ENCODE measurements at regions of chrX and their contacts with region 1.

Region 1: DNA sequence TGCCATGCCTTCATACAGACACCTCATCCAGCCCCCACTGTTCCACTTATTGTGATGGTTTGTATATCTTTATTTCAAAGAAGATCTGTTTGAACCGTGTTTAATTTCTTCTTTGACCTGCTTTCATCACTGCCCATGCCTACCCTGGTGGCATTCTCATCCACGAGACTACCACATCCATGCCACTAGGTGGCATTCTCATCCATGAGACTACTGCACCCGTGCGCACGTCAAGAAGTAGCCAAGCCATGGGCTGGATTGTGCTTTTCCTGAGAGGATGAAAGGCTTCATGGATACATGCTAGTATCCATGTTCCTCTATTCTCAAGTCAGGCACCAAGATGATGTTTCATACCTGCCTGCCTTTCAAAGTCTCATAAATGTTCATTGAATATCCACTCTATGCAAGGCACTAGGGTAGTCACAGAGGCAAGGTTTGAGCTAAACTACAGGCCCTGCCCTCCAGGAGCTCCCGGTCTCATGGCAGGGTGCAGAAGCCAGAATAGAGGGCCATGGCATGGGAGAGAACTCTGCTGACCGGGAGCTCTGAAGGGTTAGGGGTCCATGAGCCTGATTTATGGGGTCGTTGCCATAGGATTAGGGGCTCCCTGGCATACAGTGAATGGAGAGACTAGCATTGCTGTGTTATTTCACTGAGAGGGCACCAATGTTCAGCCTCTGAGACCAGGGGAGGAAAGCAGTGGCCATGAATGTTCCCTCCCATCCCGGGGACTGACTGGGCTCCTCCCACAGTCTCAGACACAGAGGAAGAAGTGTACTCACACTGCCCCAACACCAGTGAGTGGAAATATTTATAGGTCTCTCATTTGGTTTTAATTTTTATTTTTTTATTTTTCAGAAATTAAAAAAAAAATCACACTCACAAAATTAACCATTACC is 24.8 kb upstream of the EOLA2 start:
- DNase-seq: no peak
- H3K4me3 ChIP-seq: no peak overlapping the region
- H3K27ac ChIP-seq: no peak overlapping the region
- H3K4me1 ChIP-seq: no peaks in the 10 kb centered on the region
- H3K27me3 ChIP-seq: no peaks in the 10 kb centered on the region
- CTCF ChIP-seq: peak; percentile 43 to 64 (median 56)

Region 2: DNA sequence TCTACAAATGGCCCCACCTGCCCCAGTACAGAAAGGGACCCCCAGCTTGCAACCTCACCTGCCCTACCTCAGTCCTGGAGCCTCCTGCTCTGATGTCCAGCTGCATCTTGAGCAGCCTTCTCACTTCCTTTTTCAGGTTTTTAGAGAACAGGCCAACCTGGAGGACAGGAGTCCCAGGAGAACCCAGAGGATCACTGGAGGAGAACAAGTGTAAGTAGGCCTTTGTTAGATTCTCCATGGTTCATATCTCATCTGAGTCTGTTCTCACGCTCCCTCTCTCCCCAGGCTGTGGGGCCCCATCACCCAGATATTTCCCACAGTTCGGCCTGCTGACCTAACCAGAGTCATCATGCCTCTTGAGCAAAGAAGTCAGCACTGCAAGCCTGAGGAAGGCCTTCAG is 247.6 kb before region 1 on chrX:
- intact Hi-C with region 1: no loop called
- DNase-seq: no peak
- H3K4me3 ChIP-seq: no peak overlapping the region
- H3K27ac ChIP-seq: no peak overlapping the region
- H3K4me1 ChIP-seq: no peaks in the 10 kb centered on the region
- H3K27me3 ChIP-seq: no peaks in the 10 kb centered on the region
- CTCF ChIP-seq: no peak

Region 3: DNA sequence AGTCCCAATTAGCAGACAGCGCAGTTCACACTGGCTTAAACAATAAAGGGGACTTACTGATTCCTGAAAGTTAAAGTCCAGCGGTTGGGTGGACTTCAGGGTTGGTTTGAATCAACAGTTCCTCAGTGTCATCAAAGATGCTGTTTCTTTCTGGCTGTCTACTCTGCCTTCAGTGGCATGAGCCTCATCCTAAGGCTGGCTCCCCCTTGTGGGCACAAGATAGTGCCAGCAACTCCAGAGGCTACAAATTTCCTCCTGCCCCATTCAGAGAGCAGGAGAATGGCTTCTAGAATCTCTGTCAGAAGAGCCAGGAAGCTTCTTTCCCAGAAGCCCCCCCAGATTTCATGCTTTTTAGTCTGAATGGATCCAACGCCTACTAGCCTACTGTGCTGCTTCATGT is 522.9 kb after region 1 on chrX:
- intact Hi-C with region 1: loop called (anchors 5 kb)
- DNase-seq: no peak
- H3K4me3 ChIP-seq: no peak overlapping the region
- H3K27ac ChIP-seq: no peak overlapping the region
- H3K4me1 ChIP-seq: no peaks in the 10 kb centered on the region
- H3K27me3 ChIP-seq: no peaks in the 10 kb centered on the region
- CTCF ChIP-seq: peak; percentile 21 to 57 (median 38)

Region 4: DNA sequence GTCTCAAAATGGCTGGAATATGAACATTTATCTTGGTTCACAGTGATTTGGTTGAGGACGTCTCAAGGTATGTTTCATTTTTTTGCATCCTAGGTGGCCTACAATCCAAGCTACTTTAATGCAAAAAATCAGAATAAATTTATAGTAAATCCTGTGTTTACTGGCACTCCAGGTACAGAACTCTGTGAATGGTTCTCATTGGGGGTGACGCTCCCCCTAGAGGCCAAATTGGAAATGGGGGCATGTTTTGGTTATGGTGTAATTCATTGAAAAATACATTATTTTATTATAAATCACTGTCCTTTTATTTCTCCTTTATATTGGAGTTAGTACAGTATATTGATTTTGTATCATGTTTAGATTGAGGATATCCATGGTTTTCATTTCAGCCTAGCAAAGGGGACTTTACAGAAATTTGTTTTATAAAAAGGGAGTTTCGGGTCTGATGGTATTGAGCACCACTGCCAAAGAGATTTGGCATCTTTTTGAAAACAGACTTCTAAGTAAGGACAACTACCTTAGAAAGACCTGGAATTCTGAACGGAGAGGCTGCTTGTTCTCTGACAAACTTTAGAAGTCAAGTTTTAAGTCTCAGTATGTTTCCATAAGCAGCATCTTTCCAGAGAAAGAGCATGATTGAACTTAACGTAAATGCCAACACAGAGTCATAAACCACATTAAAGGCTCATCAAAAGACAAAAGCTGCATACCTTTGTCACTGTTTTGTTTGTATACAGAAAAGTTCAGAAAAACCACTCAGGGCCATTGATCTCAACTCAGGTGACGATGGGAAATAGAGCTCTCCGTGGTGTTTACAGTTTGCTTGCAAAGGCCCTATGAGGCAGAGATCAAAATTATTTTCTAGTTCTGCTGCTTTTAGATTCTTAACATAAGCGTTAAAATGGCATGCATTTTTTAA is 624.7 kb after region 1 on chrX:
- intact Hi-C with region 1: loop called (anchors 5 kb)
- DNase-seq: no peak
- H3K4me3 ChIP-seq: no peak overlapping the region
- H3K27ac ChIP-seq: no peak overlapping the region
- H3K4me1 ChIP-seq: no peaks in the 10 kb centered on the region
- H3K27me3 ChIP-seq: no peaks in the 10 kb centered on the region
- CTCF ChIP-seq: peak; percentile 36 to 60 (median 40)

Region 5: DNA sequence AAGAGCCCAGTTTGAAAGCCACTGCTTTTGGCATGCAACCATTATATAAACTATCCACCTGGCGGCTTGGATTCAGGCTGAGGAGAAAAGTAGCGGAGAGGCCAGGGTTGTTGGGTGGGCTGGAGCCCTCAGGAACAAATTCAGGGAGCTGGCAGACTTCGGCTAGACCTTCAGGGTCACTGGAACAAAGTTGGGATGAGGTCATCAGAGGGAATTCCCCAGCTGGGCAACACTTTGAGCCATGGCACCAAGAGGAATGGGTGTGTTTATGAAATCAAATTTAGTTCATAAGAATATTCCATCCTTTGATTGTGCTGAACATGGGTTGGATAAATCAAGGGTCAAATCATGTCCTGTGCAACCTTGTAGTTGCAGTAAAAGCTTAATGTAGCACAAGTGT is 752.1 kb after region 1 on chrX:
- intact Hi-C with region 1: loop called (anchors 5 kb)
- DNase-seq: no peak
- H3K4me3 ChIP-seq: no peak overlapping the region
- H3K27ac ChIP-seq: no peak overlapping the region
- H3K4me1 ChIP-seq: peaks cover 0 to 2% of the 10 kb centered on the region in 2 donors
- H3K27me3 ChIP-seq: no peaks in the 10 kb centered on the region
- CTCF ChIP-seq: no peak

Measured in ascending aorta (tissue), 2 donors.